ENCODE measurements at regions of chr12 and their contacts with region 1.

Region 1: GRCh38 chr12:45234139-45234846 is 18.4 kb downstream of the ANO6 start:
- DNase-seq: peak in 1 of 2 donors; percentile 81
- H3K4me3 ChIP-seq: peak overlapping the region; percentile 28 to 30
- H3K27ac ChIP-seq: peak overlapping the region; percentile 85 to 91
- H3K4me1 ChIP-seq: peaks cover 14 to 59% of the 10 kb centered on the region in 2 donors
- H3K27me3 ChIP-seq: no peaks in the 10 kb centered on the region
- CTCF ChIP-seq: no peak

Region 2: DNA sequence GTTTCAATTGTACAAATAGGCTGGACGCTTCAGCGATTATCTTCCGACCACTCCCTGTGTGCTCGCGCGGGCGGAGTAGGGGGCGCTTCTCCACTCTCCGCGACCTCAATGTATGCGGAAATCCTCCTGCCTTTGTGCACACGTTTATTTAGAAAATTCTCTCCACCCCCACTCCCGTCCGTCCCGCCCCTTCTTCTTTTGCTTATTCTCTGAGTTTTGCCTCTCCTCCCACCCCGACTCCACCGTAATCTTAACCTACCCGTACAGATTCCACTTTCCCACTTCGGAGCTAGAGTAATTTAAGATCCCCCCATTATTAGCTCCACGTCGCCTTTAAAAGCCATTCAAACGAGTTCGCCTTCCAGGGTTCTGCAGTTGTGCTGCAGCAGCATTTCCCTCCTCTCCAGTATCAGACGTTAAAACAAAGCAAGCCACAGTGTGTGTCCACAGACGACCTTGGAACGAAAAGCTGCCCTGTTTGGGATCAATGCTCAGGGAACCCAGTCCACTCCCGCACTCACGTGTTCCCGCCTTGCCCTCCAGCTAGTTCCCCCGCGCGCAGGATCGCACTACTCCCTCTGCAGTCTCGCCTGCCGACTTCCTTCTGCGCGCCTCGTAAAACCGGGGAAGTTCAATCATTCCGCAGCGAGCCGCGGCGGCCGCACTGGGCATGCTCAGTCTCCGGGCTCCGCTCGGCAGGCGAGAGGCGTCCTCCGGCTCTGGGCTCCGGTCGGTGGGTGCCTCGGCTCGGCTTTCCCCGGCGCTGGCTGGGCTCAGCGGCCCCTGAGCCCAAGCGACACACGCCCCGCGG is 18.7 kb before region 1 on chr12 and contains the start of gene ANO6:
- intact Hi-C with region 1: loop called (anchors 2 kb)
- DNase-seq: peak; percentile 53 to 95
- H3K4me3 ChIP-seq: peak within 1 kb of the TSS; percentile 85 to 93
- H3K27ac ChIP-seq: peak within 1 kb of the TSS; percentile 92 to 97
- H3K4me1 ChIP-seq: peaks cover 6 to 11% of the 10 kb centered on the region in 2 donors
- H3K27me3 ChIP-seq: no peaks in the 10 kb centered on the region
- CTCF ChIP-seq: peak in 2 of 3 experiments; percentile 12 to 22
- total RNA-seq, gene ANO6: 49.6 TPM

Region 3: GRCh38 chr12:45309836-45310626 is 75.7 kb after region 1 on chr12:
- intact Hi-C with region 1: loop called (anchors 2 kb)
- DNase-seq: no peak
- H3K4me3 ChIP-seq: no peak overlapping the region
- H3K27ac ChIP-seq: peak overlapping the region; percentile 73 to 86
- H3K4me1 ChIP-seq: peaks cover 14 to 69% of the 10 kb centered on the region in 2 donors
- H3K27me3 ChIP-seq: no peaks in the 10 kb centered on the region
- CTCF ChIP-seq: peak in 2 of 3 experiments; percentile 6 to 27

Measured in ascending aorta (tissue), 2 donors.